Activated CD4-positive, alpha-beta T cell treated with anti-CD3 and anti-CD28 coated beads, Interleukin-2, amount 10 ng/mL, durations not matched to agents 24 days and 14 days (primary cell): ENCODE measurements at regions of chr6 and their contacts with region 1.

Region 1: DNA sequence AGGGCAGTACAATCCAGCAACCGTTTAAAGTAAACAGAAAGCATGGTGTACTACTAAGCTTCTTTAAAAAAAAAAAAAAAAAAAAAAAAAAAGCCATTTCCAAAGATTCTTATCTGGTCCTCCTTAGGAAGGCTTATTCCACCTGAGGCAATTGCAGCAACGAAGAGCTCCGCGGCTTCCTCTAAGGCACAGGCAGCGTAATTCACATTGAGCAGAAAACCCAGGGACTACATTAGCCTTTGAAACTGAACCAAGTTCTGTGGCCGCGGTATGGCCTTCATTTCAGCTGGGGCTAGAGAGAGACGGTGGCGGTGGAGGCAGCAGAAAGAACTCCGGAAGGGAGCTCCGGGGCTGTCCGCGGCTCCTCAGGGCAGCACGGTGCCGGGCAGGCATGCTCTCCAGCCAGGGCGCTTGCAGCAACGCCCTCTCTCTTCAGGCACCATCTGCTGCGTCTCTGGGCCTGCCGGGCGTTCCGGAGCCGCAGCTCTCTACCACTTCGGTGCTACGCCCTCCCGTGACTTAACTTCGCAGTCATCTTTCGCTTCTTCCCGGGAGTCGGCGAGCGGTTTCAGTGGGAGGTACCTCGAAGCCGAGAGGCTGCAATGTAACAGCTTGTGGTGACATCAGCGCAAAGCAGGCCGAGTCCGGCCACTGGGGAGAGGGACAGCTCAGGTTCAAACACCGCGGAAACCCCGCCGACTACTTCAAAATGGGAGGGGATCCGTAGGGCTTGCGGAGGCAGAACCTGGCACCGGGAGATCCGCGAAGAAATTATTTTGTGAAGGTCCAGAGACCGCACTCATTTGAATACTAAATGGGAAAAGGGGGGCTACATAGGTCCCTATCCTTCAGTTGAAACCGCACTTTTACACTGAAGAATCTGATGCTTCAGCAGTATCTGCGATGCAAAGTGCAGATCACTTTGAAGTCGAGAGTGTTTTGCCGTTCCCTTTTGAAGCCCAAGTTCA is 100.0 kb downstream of the DST start:
- DNase-seq: peak; percentile 89
- H3K4me3 Mint-ChIP-seq: no peak overlapping the region
- H3K27ac Mint-ChIP-seq: no peak overlapping the region
- H3K4me1 Mint-ChIP-seq: no peaks in the 10 kb centered on the region
- H3K27me3 Mint-ChIP-seq: peaks cover 5% of the 10 kb centered on the region

Region 2: DNA sequence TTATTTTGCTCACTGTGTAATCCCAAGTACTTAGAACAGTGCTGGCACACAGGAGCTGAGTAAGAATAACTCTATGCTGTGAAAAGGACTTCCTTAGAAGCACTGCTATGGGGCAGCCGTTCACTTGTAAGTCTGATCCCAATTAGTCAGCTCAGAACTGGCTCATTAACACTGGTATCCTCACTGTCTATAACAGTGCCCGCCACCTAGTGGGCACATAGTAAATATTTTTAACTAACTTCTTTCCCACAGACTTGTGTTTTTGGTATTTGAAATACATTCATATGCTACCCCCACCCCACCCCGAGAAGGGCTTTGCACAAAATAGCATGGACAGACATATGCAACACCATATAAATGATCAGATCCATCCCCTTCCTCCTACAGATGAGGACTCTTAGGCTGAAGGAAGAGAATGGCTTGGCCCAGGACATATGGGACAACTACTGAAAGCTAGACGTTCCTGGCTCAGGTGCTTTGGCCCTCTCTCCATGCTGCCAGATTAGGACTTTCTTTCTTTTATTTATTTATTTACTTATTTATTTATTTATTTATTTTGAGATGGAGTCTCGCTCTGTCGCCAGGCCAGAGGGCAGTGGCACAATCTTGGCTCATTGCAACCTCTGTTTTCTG is 53.0 kb after region 1 on chr6:
- intact Hi-C with region 1: loop called (anchors 2 kb)
- DNase-seq: peak; percentile 79
- H3K4me3 Mint-ChIP-seq: no peak overlapping the region
- H3K27ac Mint-ChIP-seq: peak overlapping the region; percentile 2
- H3K4me1 Mint-ChIP-seq: peaks cover 26% of the 10 kb centered on the region
- H3K27me3 Mint-ChIP-seq: no peaks in the 10 kb centered on the region

Region 3: GRCh38 chr6:56624046-56624727 is 81.5 kb after region 1 on chr6:
- intact Hi-C with region 1: no loop called
- DNase-seq: no peak
- H3K4me3 Mint-ChIP-seq: no peak overlapping the region
- H3K27ac Mint-ChIP-seq: no peak overlapping the region
- H3K4me1 Mint-ChIP-seq: no peaks in the 10 kb centered on the region
- H3K27me3 Mint-ChIP-seq: no peaks in the 10 kb centered on the region